ENCODE measurements at regions of chr18 and their contacts with region 1.

Region 1: GRCh38 chr18:41338341-41338740 is 616.7 kb upstream of the PIK3C3 start:
- DNase-seq: no peak
- ATAC-seq: no peak
- H3K4me3 ChIP-seq: no peak overlapping the region
- H3K4me3 Mint-ChIP-seq: no peak overlapping the region
- H3K27ac ChIP-seq: no peak overlapping the region
- H3K27ac Mint-ChIP-seq: no peak overlapping the region
- H3K4me1 ChIP-seq: no peaks in the 10 kb centered on the region
- H3K4me1 Mint-ChIP-seq: no peaks in the 10 kb centered on the region
- H3K27me3 ChIP-seq: no peaks in the 10 kb centered on the region
- H3K27me3 Mint-ChIP-seq: no peaks in the 10 kb centered on the region

Region 2: GRCh38 chr18:41042866-41043265 is 295.5 kb before region 1 on chr18:
- CTCF ChIA-PET with region 1: no interaction called
- POLR2A ChIA-PET with region 1: no interaction called
- intact Hi-C with region 1: loop called in 1 of 2 experiments (anchors 10 kb)
- DNase-seq: no peak
- ATAC-seq: no peak
- H3K4me3 ChIP-seq: no peak overlapping the region
- H3K4me3 Mint-ChIP-seq: no peak overlapping the region
- H3K27ac ChIP-seq: no peak overlapping the region
- H3K27ac Mint-ChIP-seq: no peak overlapping the region
- H3K4me1 ChIP-seq: no peaks in the 10 kb centered on the region
- H3K4me1 Mint-ChIP-seq: no peaks in the 10 kb centered on the region
- H3K27me3 ChIP-seq: no peaks in the 10 kb centered on the region
- H3K27me3 Mint-ChIP-seq: no peaks in the 10 kb centered on the region

Measured in naive thymus-derived CD4-positive, alpha-beta T cell (primary cell).